CD8-positive, alpha-beta T cell (primary cell): ENCODE measurements at regions of chr5 and their contacts with region 1.

Region 1: GRCh38 chr5:58886315-58887207 is 303.7 kb downstream of the RAB3C start:
- DNase-seq: peak; percentile 21 to 77 (median 58)
- ATAC-seq: peak; percentile 79
- H3K4me3 ChIP-seq: no peak overlapping the region
- H3K4me3 Mint-ChIP-seq: no peak overlapping the region
- H3K27ac ChIP-seq: no peak overlapping the region
- H3K27ac Mint-ChIP-seq: no peak overlapping the region
- H3K4me1 ChIP-seq: no peaks in the 10 kb centered on the region
- H3K4me1 Mint-ChIP-seq: peaks cover 16% of the 10 kb centered on the region
- H3K27me3 ChIP-seq: no peaks in the 10 kb centered on the region
- H3K27me3 Mint-ChIP-seq: peaks cover 9% of the 10 kb centered on the region
- CTCF ChIP-seq: peak; percentile 84

Region 2: GRCh38 chr5:58871648-58872242 is 14.8 kb before region 1 on chr5:
- CTCF ChIA-PET with region 1: interaction called, 13 read pairs
- POLR2A ChIA-PET with region 1: no interaction called
- intact Hi-C with region 1: no loop called
- DNase-seq: peak in 3 of 9 experiments; percentile 23 to 49 (median 33)
- ATAC-seq: no peak
- H3K4me3 ChIP-seq: no peak overlapping the region
- H3K4me3 Mint-ChIP-seq: no peak overlapping the region
- H3K27ac ChIP-seq: no peak overlapping the region
- H3K27ac Mint-ChIP-seq: no peak overlapping the region
- H3K4me1 ChIP-seq: no peaks in the 10 kb centered on the region
- H3K4me1 Mint-ChIP-seq: no peaks in the 10 kb centered on the region
- H3K27me3 ChIP-seq: no peaks in the 10 kb centered on the region
- H3K27me3 Mint-ChIP-seq: peaks cover 3% of the 10 kb centered on the region
- CTCF ChIP-seq: peak; percentile 86

Region 3: GRCh38 chr5:58999804-59000595 is 113.4 kb after region 1 on chr5:
- CTCF ChIA-PET with region 1: interaction called, 12 read pairs
- POLR2A ChIA-PET with region 1: no interaction called
- intact Hi-C with region 1: no loop called
- DNase-seq: no peak
- ATAC-seq: no peak
- H3K4me3 ChIP-seq: no peak overlapping the region
- H3K4me3 Mint-ChIP-seq: no peak overlapping the region
- H3K27ac ChIP-seq: no peak overlapping the region
- H3K27ac Mint-ChIP-seq: no peak overlapping the region
- H3K4me1 ChIP-seq: peaks cover 5% of the 10 kb centered on the region
- H3K4me1 Mint-ChIP-seq: peaks cover 59% of the 10 kb centered on the region
- H3K27me3 ChIP-seq: no peaks in the 10 kb centered on the region
- H3K27me3 Mint-ChIP-seq: no peaks in the 10 kb centered on the region
- CTCF ChIP-seq: no peak

Region 4: DNA sequence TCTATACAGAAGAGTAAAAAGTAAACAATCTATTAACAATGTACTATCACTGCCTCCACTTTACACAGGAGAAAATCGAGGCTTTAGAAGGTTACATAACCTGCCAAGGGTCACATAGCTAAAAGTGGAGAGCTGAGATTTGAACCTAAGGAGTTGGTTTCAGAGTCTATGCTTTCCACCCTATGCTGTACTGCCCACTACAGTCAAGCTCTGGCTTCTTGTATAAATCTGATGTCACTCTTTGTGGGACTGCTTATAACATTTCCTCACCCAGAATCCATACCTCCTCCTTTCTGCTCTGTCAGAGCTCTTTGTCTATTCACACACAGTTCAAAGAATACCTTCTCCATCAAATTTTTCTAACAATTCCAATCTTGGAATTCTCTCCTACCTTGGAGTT is 199.5 kb after region 1 on chr5:
- CTCF ChIA-PET with region 1: no interaction called
- POLR2A ChIA-PET with region 1: no interaction called
- intact Hi-C with region 1: loop called (anchors 1 to 5 kb)
- DNase-seq: peak in 2 of 9 experiments; percentile 22 to 43
- ATAC-seq: peak; percentile 49
- H3K4me3 ChIP-seq: no peak overlapping the region
- H3K4me3 Mint-ChIP-seq: no peak overlapping the region
- H3K27ac ChIP-seq: no peak overlapping the region
- H3K27ac Mint-ChIP-seq: no peak overlapping the region
- H3K4me1 ChIP-seq: no peaks in the 10 kb centered on the region
- H3K4me1 Mint-ChIP-seq: no peaks in the 10 kb centered on the region
- H3K27me3 ChIP-seq: no peaks in the 10 kb centered on the region
- H3K27me3 Mint-ChIP-seq: peaks cover 2% of the 10 kb centered on the region
- CTCF ChIP-seq: no peak

Region 5: GRCh38 chr5:59367791-59368394 is 481.3 kb after region 1 on chr5:
- CTCF ChIA-PET with region 1: interaction called, 7 read pairs
- POLR2A ChIA-PET with region 1: no interaction called
- intact Hi-C with region 1: loop called (anchors 1 to 2 kb)
- DNase-seq: peak; percentile 1 to 64 (median 40)
- ATAC-seq: peak; percentile 46
- H3K4me3 ChIP-seq: no peak overlapping the region
- H3K4me3 Mint-ChIP-seq: no peak overlapping the region
- H3K27ac ChIP-seq: no peak overlapping the region
- H3K27ac Mint-ChIP-seq: no peak overlapping the region
- H3K4me1 ChIP-seq: no peaks in the 10 kb centered on the region
- H3K4me1 Mint-ChIP-seq: no peaks in the 10 kb centered on the region
- H3K27me3 ChIP-seq: no peaks in the 10 kb centered on the region
- H3K27me3 Mint-ChIP-seq: peaks cover 17% of the 10 kb centered on the region
- CTCF ChIP-seq: peak; percentile 63

Region 6: DNA sequence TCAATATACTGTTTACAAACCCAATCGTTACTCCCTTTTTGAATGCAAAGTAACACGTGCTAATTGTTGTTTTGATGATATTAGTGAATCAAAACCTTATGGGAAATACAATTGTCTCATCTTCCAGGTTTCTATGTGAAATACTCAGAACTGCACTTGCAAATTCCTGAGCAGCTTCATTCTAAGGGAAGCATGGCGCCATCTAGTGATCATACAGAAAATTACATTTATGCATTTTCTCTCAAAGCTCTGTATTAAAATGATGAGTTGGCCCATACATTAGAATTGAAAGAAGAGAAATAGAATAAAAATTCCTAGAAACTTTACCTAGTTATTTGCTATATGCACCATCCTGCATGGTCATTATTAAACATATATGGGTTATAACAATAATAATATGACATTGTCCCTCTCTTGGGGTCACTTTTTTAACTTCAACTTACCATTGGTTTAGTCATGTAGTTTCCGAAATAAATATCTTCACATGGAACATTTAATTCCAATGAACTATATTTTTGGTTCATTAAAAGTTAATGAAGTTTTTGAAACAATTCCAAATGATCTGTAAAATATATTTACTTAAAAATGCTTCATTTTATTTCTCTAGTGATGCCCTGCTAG is 787.0 kb after region 1 on chr5:
- CTCF ChIA-PET with region 1: no interaction called
- POLR2A ChIA-PET with region 1: no interaction called
- intact Hi-C with region 1: loop called (anchors 5 to 10 kb)
- DNase-seq: peak in 2 of 9 experiments; percentile 28 to 52
- ATAC-seq: no peak
- H3K4me3 ChIP-seq: no peak overlapping the region
- H3K4me3 Mint-ChIP-seq: no peak overlapping the region
- H3K27ac ChIP-seq: no peak overlapping the region
- H3K27ac Mint-ChIP-seq: no peak overlapping the region
- H3K4me1 ChIP-seq: no peaks in the 10 kb centered on the region
- H3K4me1 Mint-ChIP-seq: no peaks in the 10 kb centered on the region
- H3K27me3 ChIP-seq: no peaks in the 10 kb centered on the region
- H3K27me3 Mint-ChIP-seq: peaks cover 2% of the 10 kb centered on the region
- CTCF ChIP-seq: peak; percentile 88